ENCODE measurements at regions of chr5 and their contacts with region 1.

Region 1: GRCh38 chr5:160439205-160439600 is 17.5 kb downstream of the PTTG1 start:
- DNase-seq: peak; percentile 74 to 89 (median 84)
- ATAC-seq: peak; percentile 91
- H3K4me3 ChIP-seq: peak overlapping the region; percentile 64
- H3K4me3 Mint-ChIP-seq: peak overlapping the region; percentile 76 to 98 (median 86)
- H3K27ac ChIP-seq: peak overlapping the region; percentile 48
- H3K27ac Mint-ChIP-seq: peak overlapping the region; percentile 47 to 97 (median 73)
- H3K4me1 ChIP-seq: peaks cover 0 to 3% of the 10 kb centered on the region in 2 donors
- H3K4me1 Mint-ChIP-seq: peaks cover 0 to 57% (median 6%) of the 10 kb centered on the region in 7 donors
- H3K27me3 ChIP-seq: no peaks in the 10 kb centered on the region
- H3K27me3 Mint-ChIP-seq: peaks cover 0 to 14% (median 12%) of the 10 kb centered on the region in 5 donors

Region 2: GRCh38 chr5:158796812-158797497 is 1642.2 kb before region 1 on chr5:
- CTCF ChIA-PET with region 1: no interaction called
- POLR2A ChIA-PET with region 1: no interaction called
- intact Hi-C with region 1: no loop called
- DNase-seq: no peak
- ATAC-seq: no peak
- H3K4me3 ChIP-seq: no peak overlapping the region
- H3K4me3 Mint-ChIP-seq: no peak overlapping the region
- H3K27ac ChIP-seq: no peak overlapping the region
- H3K27ac Mint-ChIP-seq: no peak overlapping the region
- H3K4me1 ChIP-seq: no peaks in the 10 kb centered on the region
- H3K4me1 Mint-ChIP-seq: no peaks in the 10 kb centered on the region
- H3K27me3 ChIP-seq: no peaks in the 10 kb centered on the region
- H3K27me3 Mint-ChIP-seq: peaks cover 0 to 11% (median 0%) of the 10 kb centered on the region in 5 donors

Region 3: DNA sequence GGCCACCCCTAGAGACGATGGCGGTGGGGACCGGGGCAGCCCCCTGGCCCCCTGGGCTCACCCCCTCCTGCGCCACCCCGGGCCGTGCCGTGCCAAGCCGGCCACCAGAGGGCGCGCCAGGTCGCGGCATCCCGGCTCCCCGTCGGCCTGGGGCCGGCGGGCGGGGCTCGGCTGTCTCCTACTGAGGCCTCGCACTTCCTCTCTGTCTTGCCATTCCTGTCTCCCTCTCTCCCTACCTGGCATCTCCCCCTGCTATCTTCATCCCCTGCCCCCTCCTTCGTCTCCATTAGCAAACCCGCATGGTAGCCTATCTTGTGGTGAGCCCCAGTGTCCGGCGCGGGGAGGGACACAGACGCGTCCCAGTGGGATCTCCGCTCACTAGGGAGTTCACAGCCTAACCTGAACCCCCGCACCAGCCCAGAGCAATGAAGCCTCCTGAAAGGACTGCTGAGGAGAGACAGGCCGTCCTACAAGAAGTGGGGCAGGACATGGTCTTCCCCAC is 239.7 kb before region 1 on chr5:
- CTCF ChIA-PET with region 1: no interaction called
- POLR2A ChIA-PET with region 1: no interaction called
- intact Hi-C with region 1: no loop called
- DNase-seq: peak; percentile 35 to 86 (median 66)
- ATAC-seq: peak; percentile 93
- H3K4me3 ChIP-seq: peak overlapping the region; percentile 52
- H3K4me3 Mint-ChIP-seq: peak overlapping the region; percentile 54 to 88 (median 78)
- H3K27ac ChIP-seq: no peak overlapping the region
- H3K27ac Mint-ChIP-seq: peak overlapping the region in 2 of 9 donors; percentile 53 to 74
- H3K4me1 ChIP-seq: peaks cover 0 to 3% of the 10 kb centered on the region in 2 donors
- H3K4me1 Mint-ChIP-seq: peaks cover 0 to 11% (median 3%) of the 10 kb centered on the region in 7 donors
- H3K27me3 ChIP-seq: no peaks in the 10 kb centered on the region
- H3K27me3 Mint-ChIP-seq: peaks cover 0 to 15% (median 10%) of the 10 kb centered on the region in 5 donors

Region 4: DNA sequence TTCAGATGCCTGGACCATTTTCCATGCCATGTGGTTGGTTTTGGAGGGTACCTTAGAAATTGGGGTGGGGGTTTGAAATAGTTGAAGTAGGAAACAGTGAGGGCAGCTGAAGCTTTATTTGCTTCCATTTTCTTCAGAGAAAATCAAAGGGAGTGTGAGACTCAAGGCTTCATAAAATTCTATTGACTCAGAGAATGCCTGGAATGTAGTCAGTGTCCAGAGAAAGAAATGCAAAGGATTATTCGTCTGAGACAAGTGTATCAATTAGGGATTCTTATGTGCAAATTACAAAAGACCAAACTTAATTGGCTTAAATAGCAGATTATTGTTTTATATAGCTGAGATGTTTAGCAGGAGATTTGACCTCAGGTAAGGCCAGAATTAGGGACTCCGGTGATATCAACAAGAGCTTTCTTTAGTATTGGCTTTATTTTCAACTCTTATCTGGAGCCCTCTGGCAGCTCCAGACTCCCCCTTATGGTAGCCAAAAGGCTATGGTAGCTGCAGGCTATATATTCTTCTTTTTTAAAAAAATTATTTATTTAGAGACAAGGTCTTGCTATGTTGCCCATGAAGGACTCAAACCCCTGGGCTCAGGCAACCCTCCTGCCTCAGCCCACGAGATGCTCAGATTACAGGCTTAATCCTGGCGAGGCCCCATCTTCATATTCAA is 21.3 kb after region 1 on chr5:
- CTCF ChIA-PET with region 1: interaction called, 8 read pairs
- POLR2A ChIA-PET with region 1: no interaction called
- intact Hi-C with region 1: loop called in 1 of 2 experiments (anchors 1 kb)
- DNase-seq: no peak
- ATAC-seq: no peak
- H3K4me3 ChIP-seq: no peak overlapping the region
- H3K4me3 Mint-ChIP-seq: no peak overlapping the region
- H3K27ac ChIP-seq: no peak overlapping the region
- H3K27ac Mint-ChIP-seq: no peak overlapping the region
- H3K4me1 ChIP-seq: peaks cover 0 to 3% of the 10 kb centered on the region in 2 donors
- H3K4me1 Mint-ChIP-seq: peaks cover 0 to 33% (median 14%) of the 10 kb centered on the region in 7 donors
- H3K27me3 ChIP-seq: no peaks in the 10 kb centered on the region
- H3K27me3 Mint-ChIP-seq: peaks cover 0 to 6% (median under 1%) of the 10 kb centered on the region in 5 donors

Region 5: GRCh38 chr5:160508780-160509361 is 69.7 kb after region 1 on chr5:
- CTCF ChIA-PET with region 1: interaction called, 33 read pairs
- POLR2A ChIA-PET with region 1: no interaction called
- intact Hi-C with region 1: loop called (anchors 1 kb)
- DNase-seq: peak in 8 of 9 donors; percentile 51 to 81 (median 74)
- ATAC-seq: peak; percentile 83
- H3K4me3 ChIP-seq: no peak overlapping the region
- H3K4me3 Mint-ChIP-seq: peak overlapping the region in 2 of 10 donors; percentile 20 to 65
- H3K27ac ChIP-seq: no peak overlapping the region
- H3K27ac Mint-ChIP-seq: peak overlapping the region in 6 of 9 donors; percentile 19 to 84 (median 68)
- H3K4me1 ChIP-seq: peaks cover 9 to 32% of the 10 kb centered on the region in 2 donors
- H3K4me1 Mint-ChIP-seq: peaks cover 24 to 50% (median 29%) of the 10 kb centered on the region in 7 donors
- H3K27me3 ChIP-seq: no peaks in the 10 kb centered on the region
- H3K27me3 Mint-ChIP-seq: peaks cover 0 to 13% (median 6%) of the 10 kb centered on the region in 5 donors

Region 6: DNA sequence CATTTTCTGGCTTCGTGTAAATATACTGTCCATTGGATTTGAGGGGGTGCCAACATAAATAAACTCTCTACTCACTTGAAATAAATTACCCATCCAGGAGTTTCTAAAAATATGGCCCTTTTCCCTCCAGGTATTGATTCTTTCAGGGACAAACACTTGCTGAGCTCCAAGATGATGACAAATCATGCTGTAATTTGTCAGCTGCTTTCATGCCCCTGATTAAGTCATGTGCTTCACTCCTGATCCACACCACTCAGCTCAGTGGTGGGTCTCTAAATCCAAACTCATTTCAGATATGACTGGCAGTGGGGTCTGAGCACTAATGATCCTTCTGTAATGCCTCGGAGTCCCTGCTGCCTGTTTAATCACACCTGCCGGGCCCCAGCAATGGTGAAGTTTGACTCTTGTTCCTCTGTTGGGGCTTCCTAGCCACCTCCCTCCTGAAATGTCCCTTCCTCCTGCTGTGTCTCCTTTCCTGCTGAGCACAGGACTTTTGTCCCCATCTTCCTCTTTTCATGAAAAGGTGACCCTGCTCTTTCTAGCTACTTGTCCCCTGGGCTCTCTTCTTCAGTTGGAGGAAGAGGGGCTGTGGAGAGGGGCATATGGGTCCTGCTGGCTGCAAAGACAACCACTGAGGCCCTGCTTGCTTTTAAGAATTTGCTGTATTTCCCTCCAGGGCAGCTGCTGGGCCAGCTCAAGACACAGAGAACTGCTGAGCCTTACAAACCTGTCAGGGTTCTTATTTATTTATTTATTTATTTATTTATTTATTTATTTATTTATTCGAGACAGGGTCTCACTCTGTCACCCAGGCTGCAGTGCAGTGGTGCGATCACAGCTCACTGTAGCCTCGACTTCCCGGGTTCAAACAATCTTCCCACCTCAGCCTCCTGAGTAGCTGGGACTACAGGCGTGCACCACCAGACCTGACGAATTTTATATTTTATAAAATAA is 212.8 kb after region 1 on chr5:
- CTCF ChIA-PET with region 1: no interaction called
- POLR2A ChIA-PET with region 1: no interaction called
- intact Hi-C with region 1: loop called in 1 of 2 experiments (anchors 2 kb)
- DNase-seq: no peak
- ATAC-seq: no peak
- H3K4me3 ChIP-seq: no peak overlapping the region
- H3K4me3 Mint-ChIP-seq: no peak overlapping the region
- H3K27ac ChIP-seq: no peak overlapping the region
- H3K27ac Mint-ChIP-seq: no peak overlapping the region
- H3K4me1 ChIP-seq: no peaks in the 10 kb centered on the region
- H3K4me1 Mint-ChIP-seq: peaks cover 0 to 11% (median 0%) of the 10 kb centered on the region in 7 donors
- H3K27me3 ChIP-seq: no peaks in the 10 kb centered on the region
- H3K27me3 Mint-ChIP-seq: peaks cover 0 to 19% (median 5%) of the 10 kb centered on the region in 5 donors

Region 7: GRCh38 chr5:160846642-160847041 is 407.4 kb after region 1 on chr5:
- CTCF ChIA-PET with region 1: no interaction called
- POLR2A ChIA-PET with region 1: no interaction called
- intact Hi-C with region 1: loop called (anchors 2 kb)
- DNase-seq: no peak
- ATAC-seq: no peak
- H3K4me3 ChIP-seq: no peak overlapping the region
- H3K4me3 Mint-ChIP-seq: no peak overlapping the region
- H3K27ac ChIP-seq: no peak overlapping the region
- H3K27ac Mint-ChIP-seq: no peak overlapping the region
- H3K4me1 ChIP-seq: no peaks in the 10 kb centered on the region
- H3K4me1 Mint-ChIP-seq: no peaks in the 10 kb centered on the region
- H3K27me3 ChIP-seq: peaks cover 0 to 3% of the 10 kb centered on the region in 2 donors
- H3K27me3 Mint-ChIP-seq: peaks cover 0 to 11% (median 0%) of the 10 kb centered on the region in 5 donors

Region 8: DNA sequence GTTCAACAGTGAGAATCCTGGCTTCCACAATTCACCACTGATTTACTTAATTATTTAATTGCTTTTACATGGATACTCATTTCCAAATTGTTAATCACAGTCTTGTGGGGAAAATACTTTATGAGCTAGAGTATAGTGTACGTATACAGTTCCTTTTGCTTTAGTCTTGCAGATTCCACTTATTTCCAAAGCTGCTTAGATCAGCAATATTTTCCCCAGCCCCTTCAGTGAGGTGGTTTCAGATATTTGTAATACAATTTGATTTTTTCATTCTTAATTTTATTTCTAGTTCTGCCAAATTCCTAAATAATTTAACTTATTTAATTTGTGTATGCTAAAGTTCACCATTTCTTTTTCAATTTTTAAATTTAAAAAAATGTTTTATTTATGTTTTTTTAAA is 1206.1 kb after region 1 on chr5:
- CTCF ChIA-PET with region 1: no interaction called
- POLR2A ChIA-PET with region 1: no interaction called
- intact Hi-C with region 1: loop called in 1 of 2 experiments (anchors 5 kb)
- DNase-seq: no peak
- ATAC-seq: no peak
- H3K4me3 ChIP-seq: no peak overlapping the region
- H3K4me3 Mint-ChIP-seq: no peak overlapping the region
- H3K27ac ChIP-seq: no peak overlapping the region
- H3K27ac Mint-ChIP-seq: no peak overlapping the region
- H3K4me1 ChIP-seq: no peaks in the 10 kb centered on the region
- H3K4me1 Mint-ChIP-seq: no peaks in the 10 kb centered on the region
- H3K27me3 ChIP-seq: no peaks in the 10 kb centered on the region
- H3K27me3 Mint-ChIP-seq: no peaks in the 10 kb centered on the region